ENCODE measurements at regions of chr7 and their contacts with region 1.

Region 1: GRCh38 chr7:64307254-64308015 is 6.3 kb upstream of the ZNF736 start:
- DNase-seq: peak; percentile 89 to 98 (median 92)
- ATAC-seq: peak; percentile 98
- H3K4me3 ChIP-seq: peak overlapping the region; percentile 59
- H3K4me3 Mint-ChIP-seq: peak overlapping the region; percentile 98
- H3K27ac ChIP-seq: peak overlapping the region; percentile 65 to 83
- H3K27ac Mint-ChIP-seq: peak overlapping the region; percentile 96
- H3K4me1 ChIP-seq: peaks cover 13% of the 10 kb centered on the region
- H3K4me1 Mint-ChIP-seq: peaks cover 22% of the 10 kb centered on the region
- H3K27me3 ChIP-seq: no peaks in the 10 kb centered on the region
- H3K27me3 Mint-ChIP-seq: no peaks in the 10 kb centered on the region
- CTCF ChIP-seq: no peak

Region 2: DNA sequence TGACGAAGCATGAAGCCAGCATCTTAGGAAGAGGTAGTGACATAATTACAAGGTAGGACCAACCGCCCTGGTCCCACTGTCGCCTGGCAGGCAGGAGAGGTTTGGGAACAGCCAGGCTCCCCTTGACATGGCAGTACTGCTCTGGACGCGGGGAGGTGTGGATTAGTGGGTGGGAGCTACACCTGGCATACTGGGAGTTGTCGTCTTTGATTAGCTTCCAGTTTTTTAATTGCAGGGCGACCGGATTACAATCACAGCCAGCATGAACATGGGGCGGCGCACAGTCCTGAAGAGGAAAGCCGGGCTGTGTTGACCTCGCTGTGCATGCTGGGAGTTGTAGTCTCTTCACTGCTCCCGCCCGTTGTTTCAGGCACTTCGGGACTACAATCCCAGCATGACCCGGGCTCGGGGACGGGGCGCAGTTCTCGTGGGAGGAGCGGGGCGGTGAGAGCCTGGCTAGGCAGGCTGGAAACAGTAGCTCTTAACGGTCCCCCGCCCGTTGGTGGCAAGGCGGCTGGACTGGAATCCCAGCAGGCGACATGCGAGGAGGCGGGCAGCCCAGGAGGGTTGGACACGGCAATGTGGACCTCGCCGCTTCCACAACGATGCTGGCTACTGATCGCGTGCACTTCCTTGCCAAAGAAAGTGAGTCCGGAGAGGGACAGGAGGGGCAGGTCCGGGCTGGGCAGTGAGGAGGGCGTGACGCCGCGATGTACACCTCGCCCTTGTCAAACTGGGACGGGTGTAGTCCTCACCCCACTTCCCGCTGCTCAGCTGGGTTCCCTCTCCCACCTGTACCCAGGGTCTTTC is 406.8 kb before region 1 on chr7:
- CTCF ChIA-PET with region 1: no interaction called
- POLR2A ChIA-PET with region 1: interaction called, 12 read pairs
- intact Hi-C with region 1: loop called in 1 of 2 experiments (anchors 5 kb)
- DNase-seq: peak; percentile 79 to 96 (median 86)
- ATAC-seq: peak; percentile 93
- H3K4me3 ChIP-seq: peak overlapping the region; percentile 73
- H3K4me3 Mint-ChIP-seq: peak overlapping the region; percentile 99
- H3K27ac ChIP-seq: peak overlapping the region; percentile 55 to 87
- H3K27ac Mint-ChIP-seq: peak overlapping the region; percentile 84
- H3K4me1 ChIP-seq: peaks cover 19% of the 10 kb centered on the region
- H3K4me1 Mint-ChIP-seq: peaks cover 12% of the 10 kb centered on the region
- H3K27me3 ChIP-seq: no peaks in the 10 kb centered on the region
- H3K27me3 Mint-ChIP-seq: no peaks in the 10 kb centered on the region
- CTCF ChIP-seq: no peak

Region 3: DNA sequence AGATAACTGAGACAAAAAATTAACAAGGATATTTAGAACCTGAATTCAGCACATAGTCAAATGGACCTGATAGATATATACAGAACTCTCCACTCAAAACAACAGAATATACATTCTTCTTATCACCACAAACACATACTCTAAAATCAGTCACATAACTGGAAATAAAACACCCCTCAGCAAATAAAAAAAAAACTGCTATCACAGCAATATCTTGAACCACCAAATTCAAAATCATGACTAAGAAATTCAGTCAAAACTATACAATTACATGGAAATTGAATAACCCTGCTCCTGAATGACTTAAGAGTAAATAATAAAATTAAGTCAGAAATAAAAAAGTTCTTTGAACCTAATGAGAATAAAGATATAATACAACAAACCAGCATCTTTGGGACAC is 338.8 kb before region 1 on chr7:
- CTCF ChIA-PET with region 1: no interaction called
- POLR2A ChIA-PET with region 1: no interaction called
- intact Hi-C with region 1: no loop called
- DNase-seq: no peak
- ATAC-seq: no peak
- H3K4me3 ChIP-seq: no peak overlapping the region
- H3K4me3 Mint-ChIP-seq: no peak overlapping the region
- H3K27ac ChIP-seq: no peak overlapping the region
- H3K27ac Mint-ChIP-seq: no peak overlapping the region
- H3K4me1 ChIP-seq: no peaks in the 10 kb centered on the region
- H3K4me1 Mint-ChIP-seq: no peaks in the 10 kb centered on the region
- H3K27me3 ChIP-seq: no peaks in the 10 kb centered on the region
- H3K27me3 Mint-ChIP-seq: no peaks in the 10 kb centered on the region
- CTCF ChIP-seq: no peak

Region 4: DNA sequence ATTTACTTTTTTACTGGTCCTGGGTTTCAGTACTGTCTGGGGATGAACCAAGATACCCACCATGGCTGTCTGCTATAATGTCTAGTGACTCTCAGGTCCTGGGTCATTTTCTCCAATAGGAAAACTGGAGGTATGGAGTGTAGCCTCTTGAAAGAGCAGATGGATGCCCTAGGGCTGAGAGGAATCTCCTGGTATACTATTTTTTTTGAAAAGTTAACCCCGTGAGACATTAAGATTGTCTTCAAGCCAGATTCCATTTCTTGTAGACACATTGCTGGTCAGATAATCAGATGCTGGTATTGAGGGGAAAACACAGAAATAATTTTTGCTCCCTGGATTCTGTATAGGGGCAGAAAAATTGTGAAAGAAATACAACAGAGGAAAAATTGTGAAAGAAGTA is 158.1 kb after region 1 on chr7:
- CTCF ChIA-PET with region 1: no interaction called
- POLR2A ChIA-PET with region 1: no interaction called
- intact Hi-C with region 1: no loop called
- DNase-seq: no peak
- ATAC-seq: no peak
- H3K4me3 ChIP-seq: no peak overlapping the region
- H3K4me3 Mint-ChIP-seq: no peak overlapping the region
- H3K27ac ChIP-seq: no peak overlapping the region
- H3K27ac Mint-ChIP-seq: no peak overlapping the region
- H3K4me1 ChIP-seq: no peaks in the 10 kb centered on the region
- H3K4me1 Mint-ChIP-seq: no peaks in the 10 kb centered on the region
- H3K27me3 ChIP-seq: peaks cover 0 to 5% of the 10 kb centered on the region in 2 experiments
- H3K27me3 Mint-ChIP-seq: peaks cover 13% of the 10 kb centered on the region
- CTCF ChIP-seq: no peak

Region 5: DNA sequence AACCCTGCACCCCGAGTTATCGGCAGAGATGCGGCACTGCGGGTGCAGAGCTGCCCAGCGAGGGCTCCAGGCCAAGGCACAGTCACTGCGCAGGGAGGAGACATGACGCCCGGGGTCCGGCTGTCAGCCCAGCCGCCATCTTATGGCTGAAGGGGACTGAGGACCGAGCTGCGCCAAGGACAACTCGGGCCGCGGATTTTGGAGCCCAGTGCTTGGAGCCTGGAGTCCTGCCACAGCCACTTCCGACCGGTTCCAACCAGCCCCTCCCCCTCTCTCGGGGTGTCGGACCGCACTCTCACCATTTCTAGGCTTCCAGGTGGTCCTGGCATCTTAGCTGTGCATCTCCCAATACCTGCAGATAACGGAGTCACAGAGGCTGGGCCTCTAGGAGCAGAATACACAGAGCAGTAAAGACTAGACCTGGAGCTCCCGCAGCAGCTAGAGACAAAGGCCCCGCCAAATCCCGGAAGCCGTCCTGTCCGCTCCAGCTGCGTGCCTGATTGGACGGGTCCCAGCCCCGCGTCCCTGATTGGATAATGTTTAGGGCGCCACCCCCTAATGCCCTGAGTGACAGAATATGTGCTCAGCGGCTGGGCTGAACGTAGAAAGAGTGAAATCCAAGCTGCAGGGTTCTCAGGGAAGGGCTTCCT is 255.3 kb after region 1 on chr7 and contains the start of gene ZNF680:
- CTCF ChIA-PET with region 1: no interaction called
- POLR2A ChIA-PET with region 1: interaction called, 31 read pairs
- intact Hi-C with region 1: loop called in 1 of 2 experiments (anchors 5 kb)
- DNase-seq: peak; percentile 79 to 95 (median 84)
- ATAC-seq: peak; percentile 98
- H3K4me3 ChIP-seq: peak within 1 kb of the TSS; percentile 93
- H3K4me3 Mint-ChIP-seq: peak within 1 kb of the TSS; percentile 100
- H3K27ac ChIP-seq: peak within 1 kb of the TSS; percentile 41
- H3K27ac Mint-ChIP-seq: peak within 1 kb of the TSS; percentile 88
- H3K4me1 ChIP-seq: peaks cover 21% of the 10 kb centered on the region
- H3K4me1 Mint-ChIP-seq: peaks cover 41% of the 10 kb centered on the region
- H3K27me3 ChIP-seq: no peaks in the 10 kb centered on the region
- H3K27me3 Mint-ChIP-seq: no peaks in the 10 kb centered on the region
- CTCF ChIP-seq: no peak
- total RNA-seq, gene ZNF680: 8.3 to 8.9 TPM

Region 6: GRCh38 chr7:64665980-64666662 is 358.7 kb after region 1 on chr7 and contains the start of gene ZNF107:
- CTCF ChIA-PET with region 1: no interaction called
- POLR2A ChIA-PET with region 1: interaction called, 27 read pairs
- intact Hi-C with region 1: loop called in 1 of 2 experiments (anchors 5 kb)
- DNase-seq: peak; percentile 71 to 96 (median 79)
- ATAC-seq: peak; percentile 95
- H3K4me3 ChIP-seq: peak within 1 kb of the TSS; percentile 83
- H3K4me3 Mint-ChIP-seq: peak within 1 kb of the TSS; percentile 98
- H3K27ac ChIP-seq: peak within 1 kb of the TSS; percentile 82
- H3K27ac Mint-ChIP-seq: peak within 1 kb of the TSS; percentile 98
- H3K4me1 ChIP-seq: peaks cover 23% of the 10 kb centered on the region
- H3K4me1 Mint-ChIP-seq: peaks cover 76% of the 10 kb centered on the region
- H3K27me3 ChIP-seq: no peaks in the 10 kb centered on the region
- H3K27me3 Mint-ChIP-seq: no peaks in the 10 kb centered on the region
- CTCF ChIP-seq: no peak
- total RNA-seq, gene ZNF107: 12.4 TPM

Region 7: DNA sequence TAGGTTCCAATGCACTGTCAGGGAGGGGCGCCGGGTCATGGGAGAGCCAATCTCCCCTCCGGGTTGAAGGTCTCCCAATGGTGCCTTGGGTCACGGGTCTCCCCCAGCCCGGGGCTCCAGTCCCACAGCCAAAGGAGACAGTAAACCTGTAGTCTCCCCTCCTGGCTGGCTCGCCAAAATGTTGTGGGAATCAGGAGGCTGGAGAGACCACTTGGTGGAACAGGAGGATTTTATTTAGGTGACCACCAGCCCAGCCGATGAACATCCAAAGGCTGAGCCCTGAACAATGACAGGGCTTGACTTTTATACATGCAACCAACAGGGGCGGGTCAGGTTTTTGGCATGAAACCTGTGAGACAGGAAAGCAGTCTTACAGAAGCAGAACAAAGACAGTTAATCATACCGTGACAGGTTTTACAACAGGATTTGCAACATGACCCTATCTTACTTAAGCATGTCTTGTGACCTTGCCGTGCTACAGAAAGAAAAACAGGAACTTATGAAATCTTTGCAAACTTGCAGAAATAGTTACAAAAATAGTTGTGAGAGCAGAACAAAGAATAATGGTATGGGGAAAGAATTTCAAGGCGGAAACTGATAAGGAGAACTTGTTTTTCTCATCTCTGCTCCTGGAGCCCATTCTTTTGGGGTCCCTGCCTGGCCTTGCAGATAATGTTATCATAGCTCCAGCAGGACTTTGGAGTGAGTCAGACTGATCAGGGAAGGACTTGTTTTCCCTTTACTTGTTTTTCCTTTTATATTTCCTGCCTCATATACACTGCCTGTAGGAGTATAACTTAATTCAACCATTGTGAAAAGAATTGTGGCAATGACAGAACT is 692.0 kb after region 1 on chr7:
- CTCF ChIA-PET with region 1: no interaction called
- POLR2A ChIA-PET with region 1: no interaction called
- intact Hi-C with region 1: loop called (anchors 5 to 10 kb)
- DNase-seq: peak in 3 of 14 experiments; percentile 9 to 59 (median 39)
- ATAC-seq: no peak
- H3K4me3 ChIP-seq: no peak overlapping the region
- H3K4me3 Mint-ChIP-seq: no peak overlapping the region
- H3K27ac ChIP-seq: peak overlapping the region in 1 of 2 donors; percentile 11
- H3K27ac Mint-ChIP-seq: no peak overlapping the region
- H3K4me1 ChIP-seq: peaks cover 4% of the 10 kb centered on the region
- H3K4me1 Mint-ChIP-seq: peaks cover 22% of the 10 kb centered on the region
- H3K27me3 ChIP-seq: no peaks in the 10 kb centered on the region
- H3K27me3 Mint-ChIP-seq: no peaks in the 10 kb centered on the region
- CTCF ChIP-seq: no peak

Region 8: GRCh38 chr7:65006094-65006992 is 698.9 kb after region 1 on chr7 and contains the start of gene ERV3-1:
- CTCF ChIA-PET with region 1: no interaction called
- POLR2A ChIA-PET with region 1: interaction called, 13 read pairs
- intact Hi-C with region 1: loop called (anchors 5 to 10 kb)
- DNase-seq: peak; percentile 84 to 97 (median 90)
- ATAC-seq: peak; percentile 99
- H3K4me3 ChIP-seq: peak within 1 kb of the TSS; percentile 75
- H3K4me3 Mint-ChIP-seq: peak within 1 kb of the TSS; percentile 96
- H3K27ac ChIP-seq: peak within 1 kb of the TSS; percentile 49
- H3K27ac Mint-ChIP-seq: peak within 1 kb of the TSS; percentile 88
- H3K4me1 ChIP-seq: peaks cover 21% of the 10 kb centered on the region
- H3K4me1 Mint-ChIP-seq: peaks cover 45% of the 10 kb centered on the region
- H3K27me3 ChIP-seq: no peaks in the 10 kb centered on the region
- H3K27me3 Mint-ChIP-seq: no peaks in the 10 kb centered on the region
- CTCF ChIP-seq: no peak
- total RNA-seq, gene ERV3-1: 16.6 to 17.2 TPM

Region 9: DNA sequence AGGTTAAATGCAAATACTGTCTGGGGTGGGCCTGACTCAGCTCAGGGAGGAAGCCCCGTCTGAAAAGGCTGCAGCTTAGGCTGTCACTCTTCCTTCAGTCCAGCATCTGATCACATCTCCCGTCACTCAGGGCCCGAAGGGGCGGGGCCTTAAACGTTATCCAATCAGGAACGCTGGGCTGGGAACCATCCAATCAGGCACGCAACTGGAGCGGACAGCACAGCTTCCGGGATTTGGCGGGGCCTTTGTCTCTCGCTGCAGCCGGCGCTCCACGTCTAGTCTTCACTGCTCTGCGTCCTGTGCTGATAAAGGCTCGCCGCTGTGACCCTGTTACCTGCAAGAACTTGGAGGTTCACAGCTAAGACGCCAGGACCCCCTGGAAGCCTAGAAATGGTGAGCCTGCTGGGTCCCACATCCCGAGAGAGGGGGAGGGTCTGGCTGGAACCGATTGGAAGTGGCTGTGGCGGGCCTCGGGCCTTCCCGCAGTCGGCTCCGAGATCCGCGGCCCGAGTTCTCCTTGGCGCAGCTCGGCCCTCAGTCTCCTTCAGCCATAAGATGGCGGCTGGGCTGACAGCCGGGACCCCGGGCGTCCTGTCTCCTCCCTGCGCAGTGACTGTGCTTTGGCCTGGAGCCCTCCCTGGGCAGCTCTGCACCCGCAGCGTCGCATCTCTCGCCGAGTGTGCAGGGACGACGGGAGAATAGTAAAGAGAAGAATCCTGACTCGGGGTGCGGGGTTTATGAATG is 1066.3 kb after region 1 on chr7 and contains the start of gene ZNF92:
- CTCF ChIA-PET with region 1: no interaction called
- POLR2A ChIA-PET with region 1: interaction called, 4 read pairs
- intact Hi-C with region 1: loop called in 1 of 2 experiments (anchors 5 kb)
- DNase-seq: peak; percentile 89 to 98 (median 92)
- ATAC-seq: peak; percentile 98
- H3K4me3 ChIP-seq: peak within 1 kb of the TSS; percentile 97
- H3K4me3 Mint-ChIP-seq: peak within 1 kb of the TSS; percentile 95
- H3K27ac ChIP-seq: peak within 1 kb of the TSS; percentile 67 to 85
- H3K27ac Mint-ChIP-seq: peak within 1 kb of the TSS; percentile 94
- H3K4me1 ChIP-seq: peaks cover 38% of the 10 kb centered on the region
- H3K4me1 Mint-ChIP-seq: peaks cover 47% of the 10 kb centered on the region
- H3K27me3 ChIP-seq: no peaks in the 10 kb centered on the region
- H3K27me3 Mint-ChIP-seq: no peaks in the 10 kb centered on the region
- CTCF ChIP-seq: no peak
- total RNA-seq, gene ZNF92: 29.7 to 30.1 TPM